Activated CD4-positive, alpha-beta T cell treated with anti-CD3 and anti-CD28 coated beads for 36 hours (primary cell): ENCODE measurements at regions of chr9 and their contacts with region 1.

Region 1: GRCh38 chr9:68999393-69000105 is 14.4 kb downstream of the PRKACG start:
- DNase-seq: peak; percentile 75
- ATAC-seq: peak; percentile 90
- H3K4me3 Mint-ChIP-seq: no peak overlapping the region
- H3K27ac Mint-ChIP-seq: peak overlapping the region; percentile 63
- H3K4me1 Mint-ChIP-seq: peaks cover 24% of the 10 kb centered on the region
- H3K27me3 Mint-ChIP-seq: peaks cover 2% of the 10 kb centered on the region

Region 2: DNA sequence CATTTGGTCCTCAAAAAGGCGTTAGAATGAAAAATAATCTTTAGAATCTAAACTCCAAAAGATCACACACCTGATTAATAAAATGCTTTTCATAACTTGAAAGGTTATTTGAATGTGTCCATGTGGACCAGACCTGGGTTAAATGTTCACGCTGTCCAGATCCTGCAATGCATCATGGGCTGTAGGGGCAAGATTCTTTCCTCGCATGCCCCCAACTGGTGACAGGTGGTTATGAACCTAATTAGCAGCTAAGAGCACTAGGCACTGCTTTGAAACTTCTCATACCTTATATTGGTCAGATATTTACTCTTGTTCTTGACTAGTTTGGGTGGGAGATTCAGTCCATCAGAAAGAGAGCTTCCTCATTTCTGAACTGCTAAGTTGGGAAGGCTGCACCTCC is 313.8 kb before region 1 on chr9:
- CTCF ChIA-PET with region 1: no interaction called
- POLR2A ChIA-PET with region 1: no interaction called
- intact Hi-C with region 1: loop called in 1 of 2 experiments (anchors 5 kb)
- DNase-seq: peak; percentile 63
- ATAC-seq: peak; percentile 83
- H3K4me3 Mint-ChIP-seq: no peak overlapping the region
- H3K27ac Mint-ChIP-seq: no peak overlapping the region
- H3K4me1 Mint-ChIP-seq: peaks cover 10% of the 10 kb centered on the region
- H3K27me3 Mint-ChIP-seq: peaks cover 21% of the 10 kb centered on the region

Region 3: GRCh38 chr9:68704814-68705530 is 294.6 kb before region 1 on chr9 and contains the start of gene PIP5K1B:
- CTCF ChIA-PET with region 1: interaction called, 3 read pairs
- POLR2A ChIA-PET with region 1: no interaction called
- intact Hi-C with region 1: loop called in 1 of 2 experiments (anchors 1 kb)
- DNase-seq: peak; percentile 78
- ATAC-seq: peak; percentile 97
- H3K4me3 Mint-ChIP-seq: peak within 1 kb of the TSS; percentile 76
- H3K27ac Mint-ChIP-seq: no peak within 1 kb of the TSS
- H3K4me1 Mint-ChIP-seq: peaks cover 18% of the 10 kb centered on the region
- H3K27me3 Mint-ChIP-seq: peaks cover 64% of the 10 kb centered on the region
- total RNA-seq, gene PIP5K1B: 1.6 TPM

Region 4: DNA sequence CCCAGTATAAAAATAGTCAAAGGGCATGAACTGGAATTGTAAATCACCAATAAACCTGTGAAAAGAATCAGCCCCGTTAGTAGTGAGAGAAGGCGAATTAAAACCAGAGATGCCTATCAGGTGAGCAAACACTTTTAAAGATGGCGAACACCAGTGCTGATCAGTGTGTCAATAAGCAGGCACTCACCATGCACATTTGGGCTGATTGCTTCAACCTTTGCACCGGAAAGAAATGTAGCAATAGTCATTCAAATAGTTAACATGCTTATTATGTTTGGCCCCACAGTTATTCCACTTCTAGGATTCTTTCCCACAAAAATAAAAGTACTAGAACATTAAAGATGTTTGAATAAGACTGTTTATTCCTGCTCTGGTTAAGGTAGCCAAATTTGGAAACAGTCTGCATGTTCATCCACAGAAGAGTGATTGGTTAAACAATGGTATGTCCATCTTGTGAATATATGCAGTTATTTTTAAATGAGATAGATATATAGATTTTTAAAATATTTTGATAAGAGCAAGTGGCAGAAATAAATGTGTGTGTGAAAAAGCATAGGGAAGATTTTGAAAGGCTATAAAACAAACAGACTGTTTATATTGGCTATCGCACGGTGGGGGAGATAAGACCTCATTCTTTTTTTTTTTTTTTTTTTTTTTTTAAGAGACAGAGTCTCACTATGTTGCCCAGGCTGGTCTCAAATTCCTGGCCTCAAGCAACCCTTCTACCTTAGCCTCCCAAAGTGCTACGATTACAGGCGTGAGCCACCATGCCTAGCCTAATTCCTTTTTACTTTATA is 182.3 kb before region 1 on chr9:
- CTCF ChIA-PET with region 1: no interaction called
- POLR2A ChIA-PET with region 1: no interaction called
- intact Hi-C with region 1: no loop called
- DNase-seq: no peak
- ATAC-seq: no peak
- H3K4me3 Mint-ChIP-seq: no peak overlapping the region
- H3K27ac Mint-ChIP-seq: no peak overlapping the region
- H3K4me1 Mint-ChIP-seq: no peaks in the 10 kb centered on the region
- H3K27me3 Mint-ChIP-seq: peaks cover 6% of the 10 kb centered on the region

Region 5: GRCh38 chr9:68979538-68980314 is 19.8 kb before region 1 on chr9:
- CTCF ChIA-PET with region 1: interaction called, 54 read pairs
- POLR2A ChIA-PET with region 1: interaction called, 3 read pairs
- intact Hi-C with region 1: loop called in 1 of 2 experiments (anchors 1 kb)
- DNase-seq: peak; percentile 64
- ATAC-seq: peak; percentile 84
- H3K4me3 Mint-ChIP-seq: peak overlapping the region; percentile 35
- H3K27ac Mint-ChIP-seq: peak overlapping the region; percentile 95
- H3K4me1 Mint-ChIP-seq: peaks cover 60% of the 10 kb centered on the region
- H3K27me3 Mint-ChIP-seq: peaks cover 3% of the 10 kb centered on the region

Region 6: DNA sequence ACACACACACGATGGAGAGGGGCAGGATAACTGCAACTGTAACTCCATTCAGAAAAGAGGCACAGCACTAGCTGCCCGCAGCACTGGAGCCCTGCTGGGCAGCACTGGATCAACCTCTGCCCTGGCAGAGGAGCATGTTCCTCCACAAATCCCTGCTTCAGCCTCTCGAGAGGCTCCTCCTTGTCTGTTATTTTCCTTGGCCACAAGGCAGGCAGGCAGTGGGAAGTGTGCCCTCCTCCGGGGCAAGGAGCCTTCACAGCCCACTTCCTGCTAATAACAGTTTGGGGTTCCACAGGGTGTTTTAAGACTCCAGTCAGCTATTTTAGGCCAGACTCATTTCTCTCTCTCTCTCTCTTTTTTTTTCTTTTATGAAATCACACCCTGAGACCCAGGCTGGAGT is 47.8 kb after region 1 on chr9:
- CTCF ChIA-PET with region 1: no interaction called
- POLR2A ChIA-PET with region 1: no interaction called
- intact Hi-C with region 1: no loop called
- DNase-seq: no peak
- ATAC-seq: no peak
- H3K4me3 Mint-ChIP-seq: no peak overlapping the region
- H3K27ac Mint-ChIP-seq: no peak overlapping the region
- H3K4me1 Mint-ChIP-seq: peaks cover 10% of the 10 kb centered on the region
- H3K27me3 Mint-ChIP-seq: no peaks in the 10 kb centered on the region

Region 7: DNA sequence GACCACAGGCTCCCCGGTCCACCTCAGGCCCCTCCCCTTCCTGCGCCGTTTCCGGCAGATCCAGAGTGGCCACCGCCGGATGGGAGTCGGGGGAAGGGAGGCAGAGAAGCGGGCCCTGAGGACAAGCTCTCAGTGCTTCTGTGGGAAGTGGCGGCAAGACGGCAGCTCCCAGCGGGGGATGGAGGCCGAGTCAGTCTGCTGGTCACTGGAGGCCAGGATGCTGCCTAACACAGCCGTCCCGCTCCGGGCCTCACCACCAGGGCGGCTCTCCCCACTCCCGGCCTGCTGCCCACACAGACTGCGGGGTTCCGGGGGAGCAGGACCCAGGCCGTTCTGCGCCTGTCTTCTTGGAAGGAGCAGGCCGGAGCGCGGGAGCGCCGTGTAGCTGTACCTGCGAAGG is 67.4 kb after region 1 on chr9:
- CTCF ChIA-PET with region 1: no interaction called
- POLR2A ChIA-PET with region 1: no interaction called
- intact Hi-C with region 1: no loop called
- DNase-seq: no peak
- ATAC-seq: no peak
- H3K4me3 Mint-ChIP-seq: no peak overlapping the region
- H3K27ac Mint-ChIP-seq: no peak overlapping the region
- H3K4me1 Mint-ChIP-seq: no peaks in the 10 kb centered on the region
- H3K27me3 Mint-ChIP-seq: no peaks in the 10 kb centered on the region